Astrocyte of the cerebellum (primary cell): ENCODE measurements at regions of chr4 and their contacts with region 1.

Region 1: DNA sequence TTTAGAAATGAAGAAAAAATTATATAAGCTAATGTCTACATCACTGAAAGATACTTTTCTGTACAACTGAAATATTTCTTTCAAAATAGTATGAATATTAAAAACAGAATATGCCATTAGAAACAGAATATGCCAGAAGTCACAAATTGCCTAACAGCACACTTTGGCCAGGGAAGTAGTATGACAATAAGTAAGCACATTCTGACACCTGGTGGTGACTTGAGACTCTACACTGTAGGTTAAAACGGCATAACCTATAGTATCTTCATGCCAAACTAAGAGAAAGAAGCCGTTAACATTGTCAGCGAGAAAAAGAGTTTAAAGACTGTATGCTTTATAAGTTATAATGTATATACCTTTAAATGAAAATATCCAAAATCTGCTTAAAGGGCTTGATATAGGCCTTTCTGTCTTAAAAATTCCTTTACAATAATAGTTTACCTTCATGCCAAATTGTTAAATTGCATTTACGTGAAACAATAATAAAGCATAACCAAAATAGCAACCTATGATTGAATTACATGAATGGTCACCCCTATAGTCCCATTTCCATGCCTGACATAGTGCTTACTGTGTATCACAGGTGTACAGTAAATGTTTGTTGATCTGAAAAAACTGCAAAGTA is 32.8 kb downstream of the FAM13A start:
- DNase-seq: peak; percentile 67
- H3K4me3 ChIP-seq: no peak overlapping the region
- CTCF ChIP-seq: peak; percentile 64

Region 2: GRCh38 chr4:88706574-88706973 is 317.6 kb before region 1 on chr4:
- in situ Hi-C with region 1: loop called (anchors 25 kb)
- DNase-seq: peak; percentile 55
- H3K4me3 ChIP-seq: no peak overlapping the region
- CTCF ChIP-seq: peak; percentile 67

Region 3: GRCh38 chr4:88823058-88823919 is 200.9 kb before region 1 on chr4:
- in situ Hi-C with region 1: loop called (anchors 25 kb)
- DNase-seq: peak; percentile 89
- H3K4me3 ChIP-seq: peak overlapping the region; percentile 56
- CTCF ChIP-seq: no peak

Region 4: GRCh38 chr4:88964450-88964849 is 59.7 kb before region 1 on chr4:
- in situ Hi-C with region 1: no loop called
- DNase-seq: peak; percentile 6
- H3K4me3 ChIP-seq: no peak overlapping the region
- CTCF ChIP-seq: no peak